ENCODE measurements at regions of chr1 and their contacts with region 1.

Region 1: DNA sequence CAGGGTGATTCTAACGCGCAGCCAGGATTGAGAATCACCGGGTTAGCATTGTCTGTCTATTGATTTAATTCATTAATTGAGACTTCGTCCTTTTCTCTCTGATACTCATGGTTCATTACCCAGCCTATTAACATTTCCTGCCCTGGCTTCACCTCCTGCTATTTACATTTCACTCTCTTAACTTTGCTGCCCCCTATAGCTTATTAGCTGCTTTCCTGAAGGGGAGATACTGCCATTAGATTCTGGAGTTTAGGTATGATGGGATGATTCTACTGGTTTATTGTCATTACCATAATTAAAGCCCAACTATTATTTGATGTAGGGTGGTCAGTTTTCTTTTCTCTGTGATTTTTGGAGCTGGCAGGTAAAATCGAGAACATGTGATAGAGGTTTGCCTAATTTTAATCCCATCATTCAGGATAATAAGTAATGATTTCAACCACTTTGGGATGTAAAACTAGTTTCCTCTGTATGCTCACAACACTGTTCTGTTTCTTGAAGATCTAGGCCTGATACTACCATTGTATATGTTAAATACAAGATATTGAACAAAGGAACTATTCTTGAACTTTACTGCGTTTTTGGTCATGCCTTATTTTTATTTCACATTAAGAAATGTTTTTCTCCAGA is 6.4 kb downstream of the PPP2R5A start:
- DNase-seq: no peak
- H3K4me3 Mint-ChIP-seq: no peak overlapping the region
- H3K27ac Mint-ChIP-seq: no peak overlapping the region
- H3K4me1 Mint-ChIP-seq: peaks cover 78% of the 10 kb centered on the region
- H3K27me3 Mint-ChIP-seq: no peaks in the 10 kb centered on the region

Region 2: GRCh38 chr1:212062832-212063438 is 228.7 kb before region 1 on chr1:
- CTCF ChIA-PET with region 1: interaction called, 12 read pairs
- intact Hi-C with region 1: loop called (anchors 2 kb)
- DNase-seq: no peak
- H3K4me3 Mint-ChIP-seq: no peak overlapping the region
- H3K27ac Mint-ChIP-seq: no peak overlapping the region
- H3K4me1 Mint-ChIP-seq: no peaks in the 10 kb centered on the region
- H3K27me3 Mint-ChIP-seq: no peaks in the 10 kb centered on the region

Region 3: DNA sequence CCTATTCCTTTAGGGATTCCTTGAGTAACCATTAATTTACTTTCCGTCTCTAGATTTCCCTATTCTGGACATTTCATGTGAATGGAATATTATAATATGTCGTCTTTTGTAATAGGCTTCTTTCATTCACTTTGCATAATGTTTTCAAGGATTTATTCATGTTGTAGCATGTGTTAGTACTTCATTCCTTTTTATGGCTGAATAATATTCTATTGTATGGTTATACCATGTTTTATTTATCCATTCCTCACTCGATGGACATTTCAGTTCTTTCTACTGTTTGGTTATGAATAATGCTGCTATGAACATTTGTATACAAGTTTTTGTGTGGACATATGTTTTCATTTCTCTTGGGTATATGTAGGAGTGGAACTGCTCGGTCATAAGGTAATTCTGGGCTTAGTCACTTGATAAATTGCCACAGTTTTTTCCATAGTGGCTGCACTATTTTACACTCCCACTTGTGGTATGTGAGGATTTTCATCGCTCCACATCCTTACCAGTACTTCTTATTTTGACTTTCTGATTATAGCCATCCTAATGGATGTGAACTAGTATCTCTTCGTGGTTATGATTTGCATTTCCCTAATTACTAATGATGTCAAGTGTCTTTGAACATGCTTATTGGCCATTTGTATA is 11.2 kb after region 1 on chr1:
- CTCF ChIA-PET with region 1: no interaction called
- intact Hi-C with region 1: loop called (anchors 1 kb)
- DNase-seq: no peak
- H3K4me3 Mint-ChIP-seq: no peak overlapping the region
- H3K27ac Mint-ChIP-seq: no peak overlapping the region
- H3K4me1 Mint-ChIP-seq: peaks cover 49% of the 10 kb centered on the region
- H3K27me3 Mint-ChIP-seq: no peaks in the 10 kb centered on the region

Region 4: GRCh38 chr1:212315907-212316306 is 24.3 kb after region 1 on chr1:
- CTCF ChIA-PET with region 1: interaction called, 10 read pairs
- intact Hi-C with region 1: no loop called
- DNase-seq: peak; percentile 49
- H3K4me3 Mint-ChIP-seq: no peak overlapping the region
- H3K27ac Mint-ChIP-seq: peak overlapping the region; percentile 2
- H3K4me1 Mint-ChIP-seq: peaks cover 40% of the 10 kb centered on the region
- H3K27me3 Mint-ChIP-seq: no peaks in the 10 kb centered on the region

Measured in activated naive CD4-positive, alpha-beta T cell treated with anti-CD3 and anti-CD28 coated beads for 36 hours (primary cell).